ENCODE measurements at regions of chr3 and their contacts with region 1.

Region 1: GRCh38 chr3:187319699-187320302 is 28.3 kb upstream of the MASP1 start:
- DNase-seq: peak; percentile 83
- ATAC-seq: peak; percentile 93

Region 2: DNA sequence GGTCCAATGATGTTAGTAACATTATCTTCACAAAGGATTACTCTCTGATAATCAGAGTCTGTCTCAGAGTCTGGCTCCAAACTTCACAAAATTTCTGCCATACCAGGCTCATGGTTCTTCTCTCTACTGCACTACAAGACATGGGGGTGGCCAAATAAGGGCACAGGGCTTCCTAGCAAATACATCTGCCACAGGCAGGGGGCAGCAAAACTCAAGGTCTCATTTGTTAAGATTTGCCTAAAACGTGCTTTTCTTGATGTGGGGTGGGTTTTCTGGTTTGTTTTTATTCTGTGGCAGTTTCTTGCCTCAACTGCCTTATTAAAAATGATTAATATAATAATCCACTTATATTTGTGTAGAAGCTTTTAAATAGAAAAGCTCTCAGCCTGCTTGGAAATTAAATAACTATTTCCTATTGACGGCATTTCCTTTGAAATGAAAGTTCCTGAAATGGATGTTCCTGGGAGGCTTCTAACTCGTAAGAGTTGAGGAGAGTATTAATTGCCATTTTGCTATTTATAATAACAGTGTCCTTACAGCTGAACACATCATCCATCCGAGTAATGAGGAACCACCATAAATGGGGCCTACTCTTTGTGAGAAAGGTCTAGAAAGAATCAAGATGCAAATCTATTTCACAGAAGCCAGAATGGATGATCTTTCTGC is 296.6 kb after region 1 on chr3:
- intact Hi-C with region 1: no loop called
- DNase-seq: no peak
- ATAC-seq: peak; percentile 26

Region 3: GRCh38 chr3:187679638-187680396 is 360.0 kb after region 1 on chr3:
- intact Hi-C with region 1: loop called (anchors 5 kb)
- DNase-seq: peak; percentile 88
- ATAC-seq: peak; percentile 92

Measured in sciatic nerve (tissue), 2 donors.